ENCODE measurements at regions of chr6 and their contacts with region 1.

Region 1: GRCh38 chr6:44265007-44265721 is at the start of gene NFKBIE:
- DNase-seq: peak; percentile 95 to 97
- ATAC-seq: peak; percentile 89 to 95 (median 94)
- H3K4me3 ChIP-seq: peak within 1 kb of the TSS; percentile 66 to 98 (median 82)
- H3K27ac ChIP-seq: peak within 1 kb of the TSS; percentile 34 to 93 (median 76)
- H3K4me1 ChIP-seq: peaks cover 18 to 46% (median 28%) of the 10 kb centered on the region in 9 donors
- H3K27me3 ChIP-seq: peaks cover 5 to 27% (median 15%) of the 10 kb centered on the region in 7 donors
- CTCF ChIP-seq: peak in 7 of 9 donors; percentile 16 to 38 (median 35)
- total RNA-seq, gene NFKBIE: 1.5 to 8.7 (median 3.4) TPM

Region 2: DNA sequence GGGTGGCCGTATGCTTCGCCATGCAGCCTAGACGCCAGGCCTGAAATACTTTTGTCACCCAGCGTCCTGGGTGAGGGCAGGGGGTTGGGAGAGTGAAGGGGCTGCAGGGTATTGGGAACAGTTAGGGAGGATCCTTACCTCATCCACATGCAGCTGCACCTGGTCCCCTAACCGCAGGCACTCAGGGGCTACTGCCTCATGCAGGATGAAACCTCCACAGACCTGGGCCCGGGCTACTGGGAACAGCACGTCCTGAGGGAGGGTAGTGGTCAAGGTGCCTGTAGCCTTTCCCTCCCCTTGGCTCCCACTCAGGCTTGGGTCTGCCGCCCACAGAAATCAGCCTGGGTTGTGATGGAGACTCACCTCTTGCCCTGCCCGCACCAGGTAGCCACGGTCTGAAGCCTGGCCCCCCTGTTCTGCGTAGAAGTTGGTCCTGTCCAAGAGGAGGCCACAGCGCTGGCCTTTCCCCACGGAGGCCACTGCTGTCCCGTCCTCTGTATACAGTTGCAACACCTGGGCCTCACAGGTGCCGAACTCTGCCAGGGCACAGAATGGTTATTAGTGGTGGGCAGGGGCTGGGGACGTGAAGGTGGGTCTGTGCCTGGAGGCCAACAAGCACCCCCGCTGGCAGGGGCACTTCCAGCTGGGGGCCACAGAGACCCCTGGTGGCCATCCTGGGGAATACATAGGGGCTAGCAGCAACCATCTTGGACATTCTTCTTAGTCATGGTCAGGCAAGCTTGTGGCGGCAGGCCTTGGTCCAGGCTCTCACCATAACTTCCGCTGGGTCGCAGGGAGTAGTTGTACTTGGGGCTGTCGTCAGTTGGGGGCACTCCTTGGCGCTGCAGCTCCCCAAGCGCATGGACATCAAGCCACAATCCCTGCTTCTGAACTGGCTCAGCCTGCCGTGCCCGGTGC is 39.4 kb after region 1 on chr6:
- intact Hi-C with region 1: loop called in 2 of 10 experiments (anchors 5 kb)
- DNase-seq: no peak
- ATAC-seq: peak in 3 of 8 donors; percentile 21 to 29 (median 28)
- H3K4me3 ChIP-seq: no peak overlapping the region
- H3K27ac ChIP-seq: no peak overlapping the region
- H3K4me1 ChIP-seq: peaks cover 0 to 9% (median 3%) of the 10 kb centered on the region in 9 donors
- H3K27me3 ChIP-seq: no peaks in the 10 kb centered on the region
- CTCF ChIP-seq: peak; percentile 54 to 82 (median 64)

Region 3: GRCh38 chr6:44312901-44313788 is 48.0 kb after region 1 on chr6 and contains the start of gene AARS2:
- intact Hi-C with region 1: loop called in 2 of 10 experiments (anchors 5 kb)
- DNase-seq: peak; percentile 90 to 91
- ATAC-seq: peak; percentile 88 to 95 (median 92)
- H3K4me3 ChIP-seq: peak within 1 kb of the TSS; percentile 57 to 97 (median 88)
- H3K27ac ChIP-seq: peak within 1 kb of the TSS in 9 of 10 donors; percentile 18 to 87 (median 82)
- H3K4me1 ChIP-seq: peaks cover 0 to 30% (median 13%) of the 10 kb centered on the region in 9 donors
- H3K27me3 ChIP-seq: peaks cover 0 to 9% (median 0%) of the 10 kb centered on the region in 7 donors
- CTCF ChIP-seq: peak; percentile 97 to 100 (median 98)
- total RNA-seq, gene AARS2: 7.0 to 10.9 (median 8.5) TPM

Region 4: GRCh38 chr6:44338228-44339122 is 73.3 kb after region 1 on chr6:
- intact Hi-C with region 1: loop called (anchors 1 to 10 kb)
- DNase-seq: peak; percentile 35 to 53
- ATAC-seq: peak; percentile 67 to 83 (median 74)
- H3K4me3 ChIP-seq: no peak overlapping the region
- H3K27ac ChIP-seq: no peak overlapping the region
- H3K4me1 ChIP-seq: peaks cover 0 to 13% (median 5%) of the 10 kb centered on the region in 9 donors
- H3K27me3 ChIP-seq: peaks cover 0 to 33% (median 11%) of the 10 kb centered on the region in 7 donors
- CTCF ChIP-seq: peak; percentile 48 to 76 (median 72)